ENCODE measurements at regions of chr13 and their contacts with region 1.

Region 1: GRCh38 chr13:48233046-48233907 is at the start of gene ITM2B:
- DNase-seq: peak; percentile 94
- total RNA-seq, gene ITM2B: 386 TPM

Region 2: GRCh38 chr13:48094781-48095502 is 138.3 kb before region 1 on chr13 and contains the start of gene MED4:
- intact Hi-C with region 1: loop called (anchors 10 kb)
- DNase-seq: peak; percentile 97
- total RNA-seq, gene MED4: 39.6 TPM

Region 3: GRCh38 chr13:48126944-48127830 is 106.1 kb before region 1 on chr13:
- intact Hi-C with region 1: loop called (anchors 2 kb)
- DNase-seq: no peak